ENCODE measurements at regions of chr14 and their contacts with region 1.

Region 1: GRCh38 chr14:59137256-59137655 is 51.2 kb upstream of the DAAM1 start:
- DNase-seq: no peak
- ATAC-seq: no peak
- H3K4me3 ChIP-seq: no peak overlapping the region
- H3K27ac ChIP-seq: no peak overlapping the region
- H3K4me1 ChIP-seq: no peaks in the 10 kb centered on the region
- H3K27me3 ChIP-seq: no peaks in the 10 kb centered on the region; the same call in 1 of the 2 replicates
- CTCF ChIP-seq: no peak

Region 2: DNA sequence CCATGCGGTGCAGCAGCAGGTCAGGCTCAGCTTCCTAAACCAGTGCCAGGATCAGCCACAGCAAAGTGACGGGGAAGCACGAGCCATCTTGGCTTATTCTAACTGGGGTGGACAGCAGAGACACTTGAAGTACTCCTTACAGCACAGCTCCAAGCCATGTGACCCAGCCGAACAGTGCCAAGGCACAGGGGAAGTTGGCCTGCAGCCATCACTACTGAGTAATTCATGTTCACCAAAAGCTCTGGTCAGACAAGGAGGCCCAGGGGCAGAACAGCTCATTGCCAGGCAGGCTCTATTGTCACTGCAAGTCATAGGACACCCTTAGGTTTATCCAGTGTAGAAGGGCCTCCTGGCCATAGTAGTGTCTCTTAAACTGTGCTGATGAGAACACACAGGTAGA is 1248.0 kb before region 1 on chr14:
- CTCF ChIA-PET with region 1: no interaction called
- POLR2A ChIA-PET with region 1: interaction called, 13 read pairs
- in situ Hi-C with region 1: no loop called
- intact Hi-C with region 1: no loop called
- DNase-seq: no peak
- ATAC-seq: no peak
- H3K4me3 ChIP-seq: no peak overlapping the region
- H3K27ac ChIP-seq: no peak overlapping the region
- H3K4me1 ChIP-seq: no peaks in the 10 kb centered on the region
- H3K27me3 ChIP-seq: no peaks in the 10 kb centered on the region
- CTCF ChIP-seq: no peak

Measured in Panc1 (cell line).